ENCODE measurements at regions of chr20 and their contacts with region 1.

Region 1: GRCh38 chr20:2688041-2688591 is 4.5 kb upstream of the EBF4 start:
- DNase-seq: peak; percentile 90
- H3K4me3 Mint-ChIP-seq: peak overlapping the region; percentile 45
- H3K27ac Mint-ChIP-seq: no peak overlapping the region
- H3K4me1 Mint-ChIP-seq: peaks cover 22% of the 10 kb centered on the region
- H3K27me3 Mint-ChIP-seq: peaks cover 16% of the 10 kb centered on the region

Region 2: GRCh38 chr20:2585811-2586210 is 102.3 kb before region 1 on chr20:
- CTCF ChIA-PET with region 1: no interaction called
- POLR2A ChIA-PET with region 1: no interaction called
- intact Hi-C with region 1: no loop called
- DNase-seq: no peak
- H3K4me3 Mint-ChIP-seq: no peak overlapping the region
- H3K27ac Mint-ChIP-seq: no peak overlapping the region
- H3K4me1 Mint-ChIP-seq: no peaks in the 10 kb centered on the region
- H3K27me3 Mint-ChIP-seq: peaks cover 8% of the 10 kb centered on the region

Region 3: DNA sequence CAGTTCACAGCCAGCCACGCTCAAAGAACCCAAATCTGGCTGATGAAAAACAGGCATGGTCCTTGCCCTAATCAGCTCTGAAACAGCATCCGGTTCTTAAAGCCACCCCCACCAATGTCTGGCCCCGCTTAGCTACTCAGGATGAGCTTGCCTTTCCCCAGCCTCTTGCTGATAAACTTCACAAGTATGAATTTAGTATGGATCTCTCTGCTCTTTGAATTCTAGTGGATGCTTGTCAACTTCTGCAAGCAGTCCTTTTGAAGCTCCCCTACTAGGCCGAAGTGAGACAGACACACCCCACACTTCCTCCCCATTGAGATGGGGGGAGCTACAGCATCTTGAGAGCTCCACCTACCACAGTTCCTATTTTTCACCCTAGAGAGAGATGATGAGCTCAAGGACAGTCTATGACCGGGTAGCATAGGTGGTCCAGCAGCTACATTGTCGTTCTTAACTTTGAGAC is 41.2 kb after region 1 on chr20:
- CTCF ChIA-PET with region 1: interaction called, 12 read pairs
- POLR2A ChIA-PET with region 1: interaction called, 3 read pairs
- intact Hi-C with region 1: no loop called
- DNase-seq: peak; percentile 52
- H3K4me3 Mint-ChIP-seq: peak overlapping the region; percentile 38
- H3K27ac Mint-ChIP-seq: peak overlapping the region; percentile 81
- H3K4me1 Mint-ChIP-seq: peaks cover 15% of the 10 kb centered on the region
- H3K27me3 Mint-ChIP-seq: no peaks in the 10 kb centered on the region

Region 4: DNA sequence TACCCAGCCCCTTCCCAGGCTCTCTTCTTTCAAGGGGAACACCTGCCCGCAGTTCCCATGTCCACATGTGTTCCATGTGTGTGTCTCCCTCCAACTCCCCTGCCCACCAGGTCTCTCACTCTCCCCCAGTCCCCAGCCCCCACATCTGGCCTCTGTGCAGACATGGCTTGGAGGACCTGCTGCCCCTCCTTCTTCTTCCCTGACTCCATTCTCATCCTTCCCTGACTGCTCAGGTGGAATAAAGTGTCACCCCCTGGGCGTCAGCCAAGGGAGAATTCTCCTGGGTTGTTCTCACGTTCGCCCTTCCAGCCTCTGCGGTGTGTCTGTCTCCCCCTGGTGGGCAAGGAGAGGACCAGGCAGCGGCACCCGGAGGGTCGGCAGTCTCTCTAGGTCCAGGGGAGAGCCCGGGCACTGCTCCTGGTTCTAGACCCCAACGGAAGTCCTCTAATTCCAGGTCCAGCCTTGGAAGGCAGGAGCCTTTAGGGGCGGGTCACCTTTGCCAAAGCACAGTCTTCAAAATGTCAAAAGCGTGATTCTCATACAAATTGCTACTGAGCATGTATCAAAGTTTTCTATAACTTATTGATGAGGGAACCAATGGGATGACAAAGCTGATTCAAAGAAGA is 54.9 kb after region 1 on chr20:
- CTCF ChIA-PET with region 1: interaction called, 80 read pairs
- POLR2A ChIA-PET with region 1: interaction called, 3 read pairs
- intact Hi-C with region 1: loop called (anchors 1 kb)
- DNase-seq: peak; percentile 83
- H3K4me3 Mint-ChIP-seq: peak overlapping the region; percentile 13
- H3K27ac Mint-ChIP-seq: peak overlapping the region; percentile 53
- H3K4me1 Mint-ChIP-seq: peaks cover 41% of the 10 kb centered on the region
- H3K27me3 Mint-ChIP-seq: no peaks in the 10 kb centered on the region

Region 5: GRCh38 chr20:2849529-2849928 is 161.4 kb after region 1 on chr20:
- CTCF ChIA-PET with region 1: interaction called, 8 read pairs
- POLR2A ChIA-PET with region 1: no interaction called
- intact Hi-C with region 1: loop called (anchors 2 kb)
- DNase-seq: no peak
- H3K4me3 Mint-ChIP-seq: no peak overlapping the region
- H3K27ac Mint-ChIP-seq: no peak overlapping the region
- H3K4me1 Mint-ChIP-seq: peaks cover 33% of the 10 kb centered on the region
- H3K27me3 Mint-ChIP-seq: no peaks in the 10 kb centered on the region

Region 6: DNA sequence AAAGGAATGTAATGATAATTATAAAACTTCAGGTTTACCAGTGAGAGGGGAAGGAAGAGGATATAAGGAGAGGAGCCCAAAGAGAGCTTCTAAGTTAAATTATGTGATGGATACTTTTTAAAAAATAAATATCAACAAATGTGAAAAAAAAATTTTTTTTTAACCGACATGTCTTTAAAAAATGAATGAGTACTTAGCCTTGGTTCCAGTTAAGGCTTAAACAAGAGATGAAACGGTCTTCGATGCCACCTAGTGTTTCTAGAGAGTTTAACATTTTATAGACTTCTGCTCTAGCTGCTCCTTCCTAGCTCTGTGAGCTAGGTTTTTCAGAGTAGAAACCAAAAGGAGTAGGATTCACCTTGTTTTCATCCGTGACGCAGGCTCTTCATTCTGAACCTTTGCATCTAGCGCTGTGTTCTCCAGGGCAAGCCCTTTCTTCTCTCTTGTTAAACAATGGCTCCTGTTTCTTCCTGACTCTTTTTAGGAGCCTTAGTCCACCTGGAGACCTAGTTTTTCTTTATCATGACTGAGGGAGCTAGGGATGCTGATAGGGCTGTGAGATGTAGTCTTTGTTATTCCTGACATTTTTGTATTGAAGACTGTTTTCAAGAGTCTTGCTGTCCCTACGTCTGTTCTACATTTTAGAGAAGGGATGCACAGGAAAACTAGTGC is 312.9 kb after region 1 on chr20:
- CTCF ChIA-PET with region 1: interaction called, 9 read pairs
- POLR2A ChIA-PET with region 1: no interaction called
- intact Hi-C with region 1: loop called (anchors 1 kb)
- DNase-seq: no peak
- H3K4me3 Mint-ChIP-seq: no peak overlapping the region
- H3K27ac Mint-ChIP-seq: peak overlapping the region; percentile 51
- H3K4me1 Mint-ChIP-seq: peaks cover 9% of the 10 kb centered on the region
- H3K27me3 Mint-ChIP-seq: no peaks in the 10 kb centered on the region